Breast epithelium (tissue), 4 donors: ENCODE measurements at regions of chr7 and their contacts with region 1.

Region 1: DNA sequence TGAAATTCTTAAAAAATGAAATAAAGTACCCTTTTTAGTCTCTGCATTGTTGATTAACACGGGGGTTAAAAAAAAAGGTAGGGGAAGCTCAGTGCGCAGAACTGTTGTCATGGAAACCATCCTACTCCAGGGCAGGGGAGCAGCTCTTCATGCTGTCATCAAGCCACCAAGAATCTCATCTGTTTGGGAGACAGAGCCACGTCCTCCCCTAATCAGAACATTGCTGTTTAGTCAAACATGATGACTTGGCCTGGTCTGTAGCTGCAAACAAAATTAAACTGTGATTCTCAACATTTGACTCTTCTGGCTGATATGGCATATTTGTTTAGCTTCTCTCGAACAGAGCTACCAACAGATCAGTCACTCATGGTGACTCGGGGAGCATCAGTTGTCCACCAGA is 254.4 kb upstream of the KLF14 start:
- DNase-seq: no peak
- H3K4me3 ChIP-seq: no peak overlapping the region
- H3K27ac ChIP-seq: peak overlapping the region; percentile 60 to 77
- H3K4me1 ChIP-seq: peaks cover 8 to 32% of the 10 kb centered on the region in 2 donors
- H3K27me3 ChIP-seq: no peaks in the 10 kb centered on the region
- CTCF ChIP-seq: no peak
- POLR2A ChIP-seq: no peak

Region 2: GRCh38 chr7:130566168-130566897 is 422.1 kb before region 1 on chr7:
- intact Hi-C with region 1: loop called (anchors 5 kb)
- DNase-seq: no peak
- H3K4me3 ChIP-seq: no peak overlapping the region
- H3K27ac ChIP-seq: no peak overlapping the region
- H3K4me1 ChIP-seq: no peaks in the 10 kb centered on the region
- H3K27me3 ChIP-seq: no peaks in the 10 kb centered on the region
- CTCF ChIP-seq: no peak
- POLR2A ChIP-seq: no peak

Region 3: DNA sequence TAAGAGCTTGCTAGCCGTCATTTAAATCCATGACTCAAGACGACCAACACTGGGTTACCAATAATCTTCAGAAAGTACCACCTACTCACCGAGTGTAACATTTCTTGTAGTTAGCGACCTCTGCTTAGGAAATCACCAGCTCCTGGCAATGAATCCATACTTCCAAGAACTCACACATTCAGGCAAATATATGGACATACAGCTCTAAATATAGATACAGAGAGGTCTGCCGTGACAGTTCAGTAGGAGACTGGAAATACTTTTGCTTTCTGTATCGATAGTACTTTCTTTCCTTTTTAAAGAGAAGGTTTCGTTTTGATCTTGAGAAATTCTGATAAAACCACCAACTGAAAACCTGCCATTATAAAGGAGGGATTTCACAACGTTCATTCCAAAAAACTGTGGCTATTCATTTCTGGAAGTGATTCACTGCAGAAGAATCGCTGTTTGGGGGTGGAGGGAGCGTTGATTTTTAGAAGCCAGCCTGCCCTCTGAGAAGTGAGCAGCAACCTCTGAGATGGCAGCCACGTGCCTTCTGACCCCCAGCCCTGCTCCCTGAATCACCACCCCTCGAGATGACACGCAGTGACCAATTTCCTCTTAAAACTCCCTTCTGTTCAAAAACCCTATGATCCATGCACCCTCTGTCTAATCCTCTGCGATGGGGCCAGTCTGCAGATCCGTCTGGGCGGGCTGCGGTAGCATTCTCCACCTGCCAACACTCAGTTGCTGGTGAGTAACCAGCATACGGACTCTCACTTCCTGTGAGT is 75.4 kb before region 1 on chr7:
- intact Hi-C with region 1: no loop called
- DNase-seq: peak in 1 of 2 donors; percentile 70
- H3K4me3 ChIP-seq: peak overlapping the region; percentile 37 to 68 (median 43)
- H3K27ac ChIP-seq: peak overlapping the region; percentile 93 to 95
- H3K4me1 ChIP-seq: peaks cover 0 to 42% of the 10 kb centered on the region in 2 donors
- H3K27me3 ChIP-seq: no peaks in the 10 kb centered on the region
- CTCF ChIP-seq: no peak
- POLR2A ChIP-seq: no peak